ENCODE measurements at regions of chr17 and their contacts with region 1.

Region 1: DNA sequence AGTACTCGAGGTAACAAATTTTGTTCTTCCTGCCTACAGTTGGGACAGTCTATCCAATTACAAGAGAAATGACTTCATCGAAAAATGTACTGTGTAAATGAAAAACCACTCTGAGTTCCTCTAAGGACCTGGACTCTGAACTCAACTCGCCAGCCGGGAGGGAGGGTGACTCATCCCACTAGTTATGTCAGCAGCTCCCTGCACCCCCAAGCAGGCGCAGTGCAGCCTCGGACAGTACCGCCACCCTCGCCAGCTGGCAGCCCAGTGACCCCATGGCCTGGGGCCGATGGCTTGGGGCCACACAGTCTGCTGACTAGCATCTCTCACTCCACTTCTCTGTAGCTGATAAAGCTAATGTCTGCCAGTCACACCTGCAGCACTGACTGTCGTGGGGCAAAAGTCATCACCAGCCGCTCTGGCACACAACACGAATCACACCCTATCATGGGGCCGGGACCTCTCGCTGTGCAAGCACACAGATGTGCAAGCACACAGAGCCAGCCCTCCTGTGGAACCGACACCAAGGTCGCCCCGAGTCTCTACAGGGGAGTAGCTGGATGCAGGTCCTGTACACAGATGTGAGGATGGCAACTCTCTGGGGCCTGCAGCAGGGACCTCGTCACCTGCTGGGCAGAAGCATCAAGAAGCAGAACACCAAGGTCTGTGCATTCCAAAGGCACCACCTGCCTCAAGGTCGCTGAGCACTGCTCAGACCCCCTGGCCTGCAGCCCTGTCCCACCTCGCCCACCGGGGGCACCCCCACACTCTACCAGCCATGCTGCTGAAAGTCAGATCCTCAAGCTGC is 5.7 kb downstream of the CSNK1D start:
- DNase-seq: peak; percentile 96
- ATAC-seq: peak; percentile 94
- H3K4me3 ChIP-seq: no peak overlapping the region
- H3K27ac ChIP-seq: peak overlapping the region; percentile 74
- H3K4me1 ChIP-seq: peaks cover 38% of the 10 kb centered on the region
- H3K27me3 ChIP-seq: no peaks in the 10 kb centered on the region
- CTCF ChIP-seq: no peak
- POLR2A ChIP-seq: no peak
- RAD21 ChIP-seq: peak; percentile 8; the same call in 1 of the 2 replicates

Region 2: DNA sequence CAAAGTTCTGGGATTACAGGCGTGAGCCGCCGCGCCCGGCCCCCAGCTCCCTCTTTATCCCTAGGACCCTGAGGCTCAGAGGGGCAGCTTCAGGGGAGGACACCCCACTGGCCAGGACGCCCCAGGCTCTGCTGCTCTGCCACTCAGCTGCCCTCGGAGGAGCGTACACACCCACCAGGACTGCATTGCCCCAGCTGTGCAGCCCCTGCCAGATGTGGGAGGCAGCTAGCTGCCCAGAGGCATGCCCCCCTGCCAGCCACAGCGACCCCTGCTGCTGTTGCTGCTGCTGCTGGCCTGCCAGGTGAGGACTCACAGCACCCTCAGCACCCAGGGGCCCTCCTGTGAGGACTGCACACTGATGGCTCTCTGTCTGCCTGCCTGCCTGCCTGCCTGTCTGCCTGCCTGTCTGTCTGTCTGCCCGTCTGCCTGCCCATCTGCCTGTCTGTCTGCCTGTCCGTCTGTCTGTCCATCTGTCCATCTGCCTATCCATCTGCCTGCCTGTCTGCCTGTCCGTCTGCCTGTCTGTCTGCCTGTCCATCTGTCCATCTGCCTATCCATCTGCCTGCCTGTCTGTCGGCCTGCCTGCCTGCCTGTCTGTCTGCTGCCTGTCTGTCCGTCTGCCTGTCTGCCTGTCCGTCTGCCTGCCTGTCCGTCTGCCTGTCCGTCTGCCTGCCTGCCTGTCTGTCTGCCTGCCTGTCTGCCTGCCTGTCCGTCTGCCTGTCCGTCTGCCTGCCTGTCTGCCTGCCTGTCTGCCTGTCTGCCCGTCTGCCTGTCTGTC is 458.8 kb before region 1 on chr17:
- CTCF ChIA-PET with region 1: no interaction called
- POLR2A ChIA-PET with region 1: no interaction called
- dilution Hi-C with region 1: no loop called
- in situ Hi-C with region 1: no loop called
- intact Hi-C with region 1: no loop called
- DNase-seq: no peak
- ATAC-seq: no peak
- H3K4me3 ChIP-seq: no peak overlapping the region
- H3K27ac ChIP-seq: no peak overlapping the region
- H3K4me1 ChIP-seq: no peaks in the 10 kb centered on the region
- H3K27me3 ChIP-seq: peaks cover 59% of the 10 kb centered on the region
- CTCF ChIP-seq: no peak; the same call in 1 of the 2 replicates
- POLR2A ChIP-seq: no peak
- RAD21 ChIP-seq: no peak

Region 3: DNA sequence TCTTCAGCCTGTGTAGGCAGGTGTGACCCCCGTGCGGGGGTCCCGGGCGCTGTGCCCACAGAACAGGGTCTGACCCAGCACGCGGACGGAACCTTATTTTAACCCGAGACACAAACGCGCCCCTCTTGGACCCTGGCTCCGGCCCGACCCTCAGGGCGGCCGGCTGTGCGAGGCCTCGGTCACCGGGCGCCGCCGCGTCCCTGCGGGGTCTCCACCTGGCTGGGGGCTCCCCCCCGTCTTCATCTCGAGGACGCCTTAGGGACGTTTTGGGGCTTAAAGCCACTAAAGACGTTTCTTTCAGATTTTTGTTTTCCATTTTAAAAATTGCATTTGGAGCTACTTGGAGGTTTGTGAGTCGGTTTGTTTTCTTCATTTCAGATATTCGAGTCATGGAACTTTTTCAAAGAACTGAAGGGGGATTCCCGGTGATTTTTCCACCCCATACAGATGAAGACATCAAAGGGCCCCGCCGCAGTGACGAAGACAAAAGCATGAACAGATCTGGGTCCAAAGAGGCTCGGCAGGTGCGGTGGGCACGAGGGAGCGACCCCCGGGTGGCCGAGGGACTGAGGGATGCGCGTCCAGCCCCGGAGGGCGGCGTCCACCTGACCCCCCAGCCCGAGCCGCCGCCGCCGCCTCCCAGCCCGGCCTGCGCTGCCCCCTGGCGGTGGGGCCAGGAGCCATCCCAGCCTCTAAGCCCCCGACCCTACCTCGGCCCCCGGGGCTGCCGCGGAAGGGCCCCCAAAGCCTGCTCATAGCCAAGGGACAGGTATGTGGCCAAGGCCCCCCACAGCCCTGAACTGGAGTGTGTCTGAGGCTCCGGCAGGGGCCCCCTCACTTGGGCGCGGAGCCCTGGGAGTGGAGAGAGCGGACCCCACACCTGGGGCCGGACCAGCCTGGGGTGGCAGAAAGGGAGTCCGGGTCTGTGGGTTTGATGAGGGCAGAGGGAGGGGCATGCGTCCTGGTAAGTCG is 53.5 kb after region 1 on chr17:
- CTCF ChIA-PET with region 1: no interaction called
- POLR2A ChIA-PET with region 1: no interaction called
- dilution Hi-C with region 1: no loop called
- in situ Hi-C with region 1: no loop called
- intact Hi-C with region 1: loop called (anchors 5 kb)
- DNase-seq: no peak
- ATAC-seq: peak; percentile 80
- H3K4me3 ChIP-seq: no peak overlapping the region
- H3K27ac ChIP-seq: no peak overlapping the region
- H3K4me1 ChIP-seq: no peaks in the 10 kb centered on the region
- H3K27me3 ChIP-seq: peaks cover 10% of the 10 kb centered on the region; the same call in 1 of the 2 replicates
- CTCF ChIP-seq: peak; percentile 66
- POLR2A ChIP-seq: no peak
- RAD21 ChIP-seq: peak; percentile 70

Region 4: DNA sequence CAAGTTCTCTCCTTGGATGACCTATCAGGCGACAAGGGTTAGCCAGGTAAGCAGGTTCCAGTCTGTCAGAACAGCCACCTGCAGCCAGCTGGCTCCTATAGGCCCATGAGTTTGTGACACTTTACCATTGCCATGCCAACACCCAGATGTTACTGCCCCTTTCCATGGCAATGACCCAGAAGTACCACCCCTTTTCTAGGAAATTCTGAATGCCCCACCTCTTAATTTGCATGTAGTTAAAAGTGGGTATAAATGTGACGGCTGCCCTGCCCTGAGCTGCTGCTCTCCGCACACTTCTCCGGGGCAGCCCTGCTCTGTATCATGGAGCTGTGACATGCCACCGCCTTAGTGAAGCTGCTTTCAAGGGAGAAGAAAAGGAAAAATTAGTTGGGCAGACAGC is 75.8 kb after region 1 on chr17:
- CTCF ChIA-PET with region 1: no interaction called
- POLR2A ChIA-PET with region 1: interaction called, 16 read pairs
- dilution Hi-C with region 1: no loop called
- in situ Hi-C with region 1: no loop called
- intact Hi-C with region 1: no loop called
- DNase-seq: no peak
- ATAC-seq: no peak
- H3K4me3 ChIP-seq: no peak overlapping the region
- H3K27ac ChIP-seq: no peak overlapping the region
- H3K4me1 ChIP-seq: peaks cover 8% of the 10 kb centered on the region
- H3K27me3 ChIP-seq: peaks cover 7% of the 10 kb centered on the region
- CTCF ChIP-seq: no peak
- POLR2A ChIP-seq: no peak
- RAD21 ChIP-seq: no peak

Measured in IMR-90 (cell line).